ENCODE measurements at regions of chr3 and their contacts with region 1.

Region 1: DNA sequence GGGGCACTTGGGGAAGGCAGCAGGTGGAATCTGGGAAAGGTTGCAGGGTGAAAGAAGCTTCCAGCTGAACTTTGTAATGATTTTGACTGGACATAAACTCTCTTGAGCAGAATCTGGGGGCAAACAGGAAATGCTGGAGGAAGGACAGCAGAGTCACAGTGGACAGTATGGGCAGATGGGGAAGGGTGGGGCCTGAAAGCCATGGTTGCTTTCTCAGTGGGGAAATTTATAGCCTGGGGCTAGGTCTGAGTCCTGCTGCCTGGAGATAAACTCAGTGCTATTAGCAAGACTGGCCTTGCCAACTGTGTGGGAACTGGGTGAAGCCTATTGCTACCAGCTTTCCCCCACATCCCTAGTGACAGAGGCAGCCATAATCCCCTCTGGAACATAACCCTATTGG is 203.2 kb downstream of the OSBPL10 start:
- DNase-seq: no peak
- ATAC-seq: no peak
- H3K4me3 ChIP-seq: no peak overlapping the region
- H3K27ac ChIP-seq: no peak overlapping the region
- H3K4me1 ChIP-seq: no peaks in the 10 kb centered on the region
- H3K27me3 ChIP-seq: no peaks in the 10 kb centered on the region
- CTCF ChIP-seq: no peak

Region 2: DNA sequence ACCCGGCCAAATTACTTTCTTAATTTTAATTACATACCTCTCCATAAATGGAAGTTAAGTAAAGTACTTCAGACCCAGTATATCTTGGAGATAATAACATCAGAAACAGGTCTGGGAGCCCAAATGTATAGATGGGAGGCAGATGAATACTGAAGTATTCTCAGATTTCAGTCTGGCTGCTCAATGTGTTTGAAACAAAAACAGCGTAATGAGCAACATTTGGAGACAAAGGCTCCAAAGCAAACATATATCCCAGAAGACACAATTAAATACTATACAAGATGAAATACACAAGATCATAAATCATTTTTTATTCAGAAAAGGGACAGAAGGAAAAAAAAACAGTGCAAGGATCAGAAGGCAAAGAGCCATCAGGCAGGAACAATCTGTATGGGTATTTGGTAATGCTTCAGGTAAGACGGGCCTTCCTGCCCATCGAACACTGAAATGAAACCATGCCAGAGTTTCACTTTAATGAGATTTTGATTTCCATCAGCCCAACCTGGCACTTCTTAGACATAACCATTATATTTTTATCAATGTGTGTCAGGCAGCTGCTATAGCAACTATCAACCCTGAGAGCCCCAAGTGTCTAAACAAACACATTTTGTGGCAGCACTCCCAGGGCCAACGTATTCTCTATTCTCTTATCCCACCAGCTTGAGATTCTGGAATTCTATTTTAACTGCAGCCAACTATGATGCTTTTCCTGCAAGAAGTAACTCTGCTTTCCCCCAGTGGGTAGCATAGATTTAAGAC is 34.4 kb before region 1 on chr3:
- CTCF ChIA-PET with region 1: no interaction called
- POLR2A ChIA-PET with region 1: no interaction called
- in situ Hi-C with region 1: no loop called
- intact Hi-C with region 1: no loop called
- DNase-seq: no peak
- ATAC-seq: no peak
- H3K4me3 ChIP-seq: no peak overlapping the region
- H3K27ac ChIP-seq: no peak overlapping the region
- H3K4me1 ChIP-seq: no peaks in the 10 kb centered on the region
- H3K27me3 ChIP-seq: no peaks in the 10 kb centered on the region
- CTCF ChIP-seq: no peak

Region 3: DNA sequence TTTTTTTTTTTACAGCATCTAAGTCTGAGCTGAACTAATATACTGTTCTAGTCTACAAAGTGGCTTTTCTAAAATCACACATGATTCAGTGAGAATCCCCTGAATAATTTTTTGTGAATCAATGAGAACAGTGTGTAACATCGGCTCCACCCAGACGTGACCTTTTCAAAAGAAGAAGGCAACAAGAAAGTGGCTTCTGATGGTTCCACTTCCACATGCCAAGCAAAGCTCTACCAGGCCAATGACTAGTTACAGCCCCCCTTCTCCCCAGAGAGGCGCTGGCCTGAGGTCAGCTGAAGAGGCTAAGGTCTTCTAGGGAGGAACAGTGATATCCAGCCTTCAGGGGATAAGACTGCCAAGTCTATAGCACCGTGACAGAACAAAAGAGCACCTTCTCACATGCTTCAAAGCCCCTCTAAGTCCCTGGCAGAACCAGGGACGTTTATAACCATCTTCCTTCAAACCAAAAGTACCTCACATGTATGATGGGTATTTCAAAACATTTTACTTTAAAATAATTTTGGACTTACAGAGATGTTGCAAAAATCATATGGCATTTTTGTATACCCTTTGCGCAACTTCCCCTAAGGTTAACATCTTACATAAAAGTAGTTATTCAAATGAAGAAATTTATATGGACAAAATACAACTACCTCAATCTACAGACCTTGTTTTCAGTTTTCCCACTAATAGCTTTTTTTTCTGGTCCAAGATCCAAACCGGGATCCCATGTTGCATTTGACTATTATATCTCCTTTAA is 25.3 kb after region 1 on chr3:
- CTCF ChIA-PET with region 1: no interaction called
- POLR2A ChIA-PET with region 1: interaction called, 10 read pairs
- in situ Hi-C with region 1: no loop called
- intact Hi-C with region 1: no loop called
- DNase-seq: no peak
- ATAC-seq: no peak
- H3K4me3 ChIP-seq: no peak overlapping the region
- H3K27ac ChIP-seq: no peak overlapping the region
- H3K4me1 ChIP-seq: no peaks in the 10 kb centered on the region
- H3K27me3 ChIP-seq: no peaks in the 10 kb centered on the region
- CTCF ChIP-seq: no peak

Region 4: DNA sequence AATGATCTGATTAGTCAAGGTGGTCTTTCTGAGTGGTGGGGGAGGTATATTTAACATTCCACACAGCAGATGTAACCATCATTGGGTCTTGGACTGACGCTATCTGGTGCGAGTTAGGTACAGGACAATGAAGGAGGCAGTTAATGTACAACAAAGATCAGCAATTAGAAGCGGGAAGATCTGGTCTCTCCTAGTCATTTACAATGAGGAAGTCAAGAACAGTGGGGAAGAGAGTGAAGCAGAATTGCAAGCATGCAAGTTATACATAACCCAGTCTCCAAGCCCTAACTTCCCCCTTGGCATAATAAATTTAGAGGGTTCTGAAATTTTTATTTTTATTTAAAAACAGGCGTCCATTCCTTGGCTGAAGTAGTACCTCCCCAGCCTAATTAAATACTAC is 342.6 kb after region 1 on chr3:
- CTCF ChIA-PET with region 1: no interaction called
- POLR2A ChIA-PET with region 1: no interaction called
- in situ Hi-C with region 1: no loop called
- intact Hi-C with region 1: no loop called
- DNase-seq: no peak
- ATAC-seq: no peak
- H3K4me3 ChIP-seq: no peak overlapping the region
- H3K27ac ChIP-seq: no peak overlapping the region
- H3K4me1 ChIP-seq: no peaks in the 10 kb centered on the region
- H3K27me3 ChIP-seq: no peaks in the 10 kb centered on the region
- CTCF ChIP-seq: no peak

Measured in Panc1 (cell line).